Activated CD4-positive, alpha-beta memory T cell treated with anti-CD3 and anti-CD28 coated beads for 36 hours (primary cell): ENCODE measurements at regions of chr18 and their contacts with region 1.

Region 1: GRCh38 chr18:12934454-12935071 is 13.2 kb upstream of the SEH1L start:
- DNase-seq: peak; percentile 86
- H3K4me3 Mint-ChIP-seq: no peak overlapping the region
- H3K27ac Mint-ChIP-seq: no peak overlapping the region
- H3K4me1 Mint-ChIP-seq: peaks cover 4% of the 10 kb centered on the region
- H3K27me3 Mint-ChIP-seq: peaks cover 2% of the 10 kb centered on the region

Region 2: DNA sequence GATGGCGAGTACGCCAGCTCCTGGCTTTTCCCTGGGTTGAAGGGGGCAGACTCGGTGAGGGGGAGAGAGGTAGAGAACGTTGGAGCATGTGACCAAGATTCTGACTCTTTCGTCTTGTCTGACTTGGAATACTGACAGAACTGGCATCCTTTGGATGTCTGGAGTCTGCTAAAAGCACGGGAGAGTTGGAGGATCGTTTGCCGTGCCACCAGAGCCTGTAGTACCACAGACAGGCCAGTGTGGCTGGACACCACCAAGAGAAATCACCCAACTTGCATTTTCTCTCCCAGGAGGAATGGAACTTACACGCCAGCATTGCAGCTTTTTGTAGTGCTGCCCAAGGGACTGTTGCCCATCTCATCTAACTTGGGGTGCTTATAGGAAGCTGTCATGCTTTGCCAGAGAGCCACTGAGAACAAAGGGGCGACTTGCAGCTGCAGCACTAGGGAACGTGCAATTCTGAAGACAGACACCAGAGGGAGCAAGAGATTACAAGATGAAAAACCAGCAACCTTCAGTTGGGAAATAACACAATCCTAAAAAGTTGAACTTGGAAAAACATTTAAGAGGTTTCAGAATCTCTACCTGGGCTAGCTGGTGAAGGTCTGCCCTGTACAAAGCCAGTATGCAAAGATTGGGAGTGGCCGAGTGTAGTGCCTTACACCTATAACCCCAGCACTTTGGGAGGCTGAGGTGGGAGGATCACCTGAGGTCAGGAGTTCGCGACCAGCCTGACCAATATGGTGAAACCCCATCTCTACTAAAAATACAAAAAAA is 207.6 kb before region 1 on chr18:
- CTCF ChIA-PET with region 1: interaction called, 150 read pairs
- POLR2A ChIA-PET with region 1: no interaction called
- intact Hi-C with region 1: loop called (anchors 1 kb)
- DNase-seq: peak; percentile 43
- H3K4me3 Mint-ChIP-seq: no peak overlapping the region
- H3K27ac Mint-ChIP-seq: no peak overlapping the region
- H3K4me1 Mint-ChIP-seq: peaks cover 1% of the 10 kb centered on the region
- H3K27me3 Mint-ChIP-seq: no peaks in the 10 kb centered on the region

Region 3: GRCh38 chr18:12857215-12857905 is 77.2 kb before region 1 on chr18:
- CTCF ChIA-PET with region 1: no interaction called
- POLR2A ChIA-PET with region 1: no interaction called
- intact Hi-C with region 1: no loop called
- DNase-seq: peak; percentile 76
- H3K4me3 Mint-ChIP-seq: peak overlapping the region; percentile 18
- H3K27ac Mint-ChIP-seq: peak overlapping the region; percentile 84
- H3K4me1 Mint-ChIP-seq: peaks cover 64% of the 10 kb centered on the region
- H3K27me3 Mint-ChIP-seq: no peaks in the 10 kb centered on the region

Region 4: DNA sequence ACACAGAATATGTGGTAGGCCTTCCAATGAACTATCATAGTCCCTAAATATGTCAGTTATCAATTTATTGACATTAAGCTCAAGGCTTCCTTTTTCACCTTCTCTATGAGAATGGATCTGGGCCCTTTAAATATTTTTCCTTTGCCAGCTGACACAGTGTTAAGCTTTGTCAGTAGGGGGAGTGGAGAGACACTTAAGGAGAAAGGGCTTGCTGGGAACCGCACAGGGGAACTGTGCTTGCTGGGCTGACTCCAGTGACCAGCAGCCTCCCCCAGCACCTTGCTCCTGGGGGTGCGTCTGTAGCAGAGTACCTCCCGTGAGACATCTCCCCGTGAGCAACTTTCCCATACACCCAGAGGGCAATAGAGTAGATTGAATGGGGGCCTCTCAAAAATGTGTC is 44.1 kb before region 1 on chr18:
- CTCF ChIA-PET with region 1: interaction called, 36 read pairs
- POLR2A ChIA-PET with region 1: no interaction called
- intact Hi-C with region 1: loop called (anchors 2 kb)
- DNase-seq: no peak
- H3K4me3 Mint-ChIP-seq: no peak overlapping the region
- H3K27ac Mint-ChIP-seq: no peak overlapping the region
- H3K4me1 Mint-ChIP-seq: peaks cover 15% of the 10 kb centered on the region
- H3K27me3 Mint-ChIP-seq: peaks cover 5% of the 10 kb centered on the region

Region 5: GRCh38 chr18:12921178-12921577 is 13.4 kb before region 1 on chr18:
- CTCF ChIA-PET with region 1: interaction called, 34 read pairs
- POLR2A ChIA-PET with region 1: interaction called, 3 read pairs
- intact Hi-C with region 1: no loop called
- DNase-seq: peak; percentile 61
- H3K4me3 Mint-ChIP-seq: no peak overlapping the region
- H3K27ac Mint-ChIP-seq: no peak overlapping the region
- H3K4me1 Mint-ChIP-seq: peaks cover 6% of the 10 kb centered on the region
- H3K27me3 Mint-ChIP-seq: no peaks in the 10 kb centered on the region